ENCODE measurements at regions of chr16 and their contacts with region 1.

Region 1: GRCh38 chr16:56203052-56203451 is 11.8 kb downstream of the GNAO1 start:
- DNase-seq: peak; percentile 35
- H3K4me3 Mint-ChIP-seq: no peak overlapping the region
- H3K27ac Mint-ChIP-seq: no peak overlapping the region
- H3K4me1 Mint-ChIP-seq: peaks cover 14% of the 10 kb centered on the region
- H3K27me3 Mint-ChIP-seq: peaks cover 17% of the 10 kb centered on the region

Region 2: DNA sequence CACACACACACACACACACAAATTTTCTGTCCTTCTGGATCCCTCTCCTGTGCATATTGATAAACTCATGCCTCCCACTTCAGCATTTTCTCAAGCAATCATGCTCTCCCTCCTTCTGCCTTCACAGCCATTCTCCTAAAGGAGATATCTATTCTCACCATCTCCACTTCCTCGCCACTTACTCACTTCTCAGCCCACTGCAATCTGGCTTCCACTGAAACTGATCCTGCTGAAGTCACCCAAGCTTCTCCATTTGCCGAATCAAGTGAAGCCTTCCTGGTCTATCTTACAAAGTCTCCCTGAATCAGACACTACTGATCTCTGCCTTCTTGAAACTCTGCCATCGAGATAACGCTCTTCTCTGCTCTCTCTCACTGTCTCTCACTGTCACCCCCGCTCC is 65.8 kb before region 1 on chr16:
- intact Hi-C with region 1: loop called (anchors 2 kb)
- DNase-seq: no peak
- H3K4me3 Mint-ChIP-seq: no peak overlapping the region
- H3K27ac Mint-ChIP-seq: no peak overlapping the region
- H3K4me1 Mint-ChIP-seq: peaks cover 7% of the 10 kb centered on the region
- H3K27me3 Mint-ChIP-seq: peaks cover 28% of the 10 kb centered on the region

Region 3: GRCh38 chr16:56269811-56270684 is 67.0 kb after region 1 on chr16:
- intact Hi-C with region 1: no loop called
- DNase-seq: no peak
- H3K4me3 Mint-ChIP-seq: no peak overlapping the region
- H3K27ac Mint-ChIP-seq: no peak overlapping the region
- H3K4me1 Mint-ChIP-seq: no peaks in the 10 kb centered on the region
- H3K27me3 Mint-ChIP-seq: peaks cover 30% of the 10 kb centered on the region

Measured in activated T-helper 2 cell treated with anti-CD3 and anti-CD28 coated beads, Interferon-gamma antibody, Interleukin-2, Interleukin-4, amounts not matched to agents 10 μg/mL and 5 μg/mL and 100 μg/mL, durations not matched to agents 14 hours and 24 hours and 36 hours (primary cell).